HepG2 (cell line): ENCODE measurements at regions of chr4 and their contacts with region 1.

Region 1: GRCh38 chr4:136864580-136865185 is 667.6 kb downstream of the PCDH18 start:
- DNase-seq: peak; percentile 32
- ATAC-seq: peak; percentile 77; the same call in 2 of the 3 replicates
- H3K4me3 ChIP-seq: no peak overlapping the region
- H3K27ac ChIP-seq: no peak overlapping the region
- H3K4me1 ChIP-seq: no peaks in the 10 kb centered on the region
- H3K27me3 ChIP-seq: no peaks in the 10 kb centered on the region; a peak in 1 of 5 replicates
- CTCF ChIP-seq: peak; percentile 70
- EP300 ChIP-seq: no peak
- POLR2A ChIP-seq: no peak
- RAD21 ChIP-seq: peak; percentile 52

Region 2: DNA sequence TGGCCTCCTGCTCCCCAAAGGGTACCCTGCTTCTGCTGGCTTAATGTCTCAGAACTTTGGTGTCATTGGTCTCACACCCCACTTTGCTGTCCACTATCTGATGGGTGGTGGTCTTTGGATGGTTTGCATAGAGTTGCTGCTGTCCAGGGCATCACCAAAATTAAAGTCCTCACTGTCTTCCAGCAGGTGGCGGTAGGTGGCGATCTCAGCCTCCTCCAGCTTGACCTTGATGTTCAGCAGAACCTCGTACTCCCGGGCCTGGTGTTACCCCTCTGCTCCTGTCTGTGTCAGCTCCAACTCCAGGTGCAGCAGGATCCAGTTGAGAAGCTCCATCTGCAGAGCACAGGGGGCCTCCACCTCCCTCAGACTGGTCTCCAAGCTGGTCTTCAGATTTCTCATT is 1493.5 kb before region 1 on chr4:
- CTCF ChIA-PET with region 1: interaction called, 9 read pairs
- POLR2A ChIA-PET with region 1: no interaction called
- in situ Hi-C with region 1: loop called (anchors 10 kb)
- intact Hi-C with region 1: no loop called
- DNase-seq: peak; percentile 15
- ATAC-seq: peak; percentile 88
- H3K4me3 ChIP-seq: no peak overlapping the region
- H3K27ac ChIP-seq: no peak overlapping the region
- H3K4me1 ChIP-seq: no peaks in the 10 kb centered on the region
- H3K27me3 ChIP-seq: no peaks in the 10 kb centered on the region
- CTCF ChIP-seq: peak; percentile 66
- EP300 ChIP-seq: no peak
- POLR2A ChIP-seq: no peak
- RAD21 ChIP-seq: no peak

Region 3: DNA sequence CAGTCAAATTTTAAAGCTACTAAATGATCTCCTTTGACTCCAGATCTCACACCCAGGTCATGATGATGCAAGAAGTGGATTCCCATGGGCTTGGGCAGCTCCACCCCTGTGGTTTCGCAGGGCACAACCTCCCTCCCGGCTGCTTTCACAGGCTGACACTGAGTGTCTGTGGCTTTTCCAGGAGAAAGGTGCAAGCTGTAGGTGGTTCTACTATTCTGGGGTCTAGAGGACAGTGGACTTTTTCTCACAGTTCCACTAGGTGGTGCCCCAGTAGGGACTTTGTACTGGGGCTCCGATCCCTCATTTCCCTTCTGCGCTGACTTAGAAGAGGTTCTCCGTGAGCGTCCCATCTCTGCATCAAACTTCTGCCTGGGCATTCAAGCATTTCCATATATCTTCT is 177.6 kb before region 1 on chr4:
- CTCF ChIA-PET with region 1: no interaction called
- POLR2A ChIA-PET with region 1: no interaction called
- in situ Hi-C with region 1: no loop called
- intact Hi-C with region 1: loop called (anchors 1 kb)
- DNase-seq: peak; percentile 2
- ATAC-seq: peak; percentile 66
- H3K4me3 ChIP-seq: no peak overlapping the region
- H3K27ac ChIP-seq: no peak overlapping the region
- H3K4me1 ChIP-seq: no peaks in the 10 kb centered on the region
- H3K27me3 ChIP-seq: no peaks in the 10 kb centered on the region
- CTCF ChIP-seq: no peak
- EP300 ChIP-seq: no peak
- POLR2A ChIP-seq: no peak
- RAD21 ChIP-seq: no peak